ENCODE measurements at regions of chr19 and their contacts with region 1.

Region 1: GRCh38 chr19:34712395-34713261 is 21.4 kb upstream of the ZNF181 start:
- DNase-seq: peak in 1 of 2 donors; percentile 36
- H3K4me3 ChIP-seq: no peak overlapping the region
- H3K27ac ChIP-seq: no peak overlapping the region
- H3K4me1 ChIP-seq: no peaks in the 10 kb centered on the region
- H3K27me3 ChIP-seq: no peaks in the 10 kb centered on the region
- CTCF ChIP-seq: peak; percentile 71 to 85

Region 2: GRCh38 chr19:34639491-34640085 is 73.0 kb before region 1 on chr19:
- intact Hi-C with region 1: loop called (anchors 2 kb)
- DNase-seq: no peak
- H3K4me3 ChIP-seq: no peak overlapping the region
- H3K27ac ChIP-seq: no peak overlapping the region
- H3K4me1 ChIP-seq: no peaks in the 10 kb centered on the region
- H3K27me3 ChIP-seq: no peaks in the 10 kb centered on the region
- CTCF ChIP-seq: peak; percentile 60 to 67

Region 3: DNA sequence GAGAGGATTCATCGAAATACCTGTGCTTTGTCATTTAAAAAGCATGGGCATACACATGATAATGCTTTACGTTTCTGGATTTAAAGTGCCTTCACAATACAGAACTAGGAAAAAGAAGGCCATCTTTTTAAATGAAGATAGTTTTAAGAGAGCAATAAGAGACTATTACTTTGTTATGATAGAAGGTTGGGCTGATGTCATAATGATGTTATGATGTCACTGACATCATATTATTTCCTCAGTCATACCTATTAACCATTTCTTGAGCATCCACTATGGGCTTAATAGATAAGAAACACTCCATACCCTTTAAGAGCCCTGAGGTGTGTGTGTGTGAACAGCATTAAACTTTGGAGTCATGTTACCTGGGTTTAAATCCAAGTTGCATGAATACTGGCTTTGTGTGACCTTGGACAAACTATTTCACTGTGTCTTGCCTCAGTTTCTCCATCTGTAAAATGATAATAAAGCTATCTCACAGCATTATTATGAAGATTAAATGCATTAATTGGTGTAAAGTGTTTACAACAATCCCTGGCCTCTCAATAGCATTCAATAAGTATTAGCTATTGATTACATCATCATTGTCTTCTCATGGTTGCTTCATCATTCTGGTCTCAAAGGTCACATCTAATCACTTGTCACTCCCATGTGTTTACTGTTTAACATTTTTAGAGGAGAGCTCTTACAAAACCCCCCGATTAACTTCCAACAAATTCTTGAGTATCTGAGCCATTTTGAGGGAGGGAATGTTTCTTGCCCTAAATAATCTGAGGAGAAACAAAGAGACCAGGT is 32.5 kb after region 1 on chr19:
- intact Hi-C with region 1: no loop called
- DNase-seq: no peak
- H3K4me3 ChIP-seq: no peak overlapping the region
- H3K27ac ChIP-seq: no peak overlapping the region
- H3K4me1 ChIP-seq: no peaks in the 10 kb centered on the region
- H3K27me3 ChIP-seq: no peaks in the 10 kb centered on the region
- CTCF ChIP-seq: no peak